ENCODE measurements at regions of chr3 and their contacts with region 1.

Region 1: DNA sequence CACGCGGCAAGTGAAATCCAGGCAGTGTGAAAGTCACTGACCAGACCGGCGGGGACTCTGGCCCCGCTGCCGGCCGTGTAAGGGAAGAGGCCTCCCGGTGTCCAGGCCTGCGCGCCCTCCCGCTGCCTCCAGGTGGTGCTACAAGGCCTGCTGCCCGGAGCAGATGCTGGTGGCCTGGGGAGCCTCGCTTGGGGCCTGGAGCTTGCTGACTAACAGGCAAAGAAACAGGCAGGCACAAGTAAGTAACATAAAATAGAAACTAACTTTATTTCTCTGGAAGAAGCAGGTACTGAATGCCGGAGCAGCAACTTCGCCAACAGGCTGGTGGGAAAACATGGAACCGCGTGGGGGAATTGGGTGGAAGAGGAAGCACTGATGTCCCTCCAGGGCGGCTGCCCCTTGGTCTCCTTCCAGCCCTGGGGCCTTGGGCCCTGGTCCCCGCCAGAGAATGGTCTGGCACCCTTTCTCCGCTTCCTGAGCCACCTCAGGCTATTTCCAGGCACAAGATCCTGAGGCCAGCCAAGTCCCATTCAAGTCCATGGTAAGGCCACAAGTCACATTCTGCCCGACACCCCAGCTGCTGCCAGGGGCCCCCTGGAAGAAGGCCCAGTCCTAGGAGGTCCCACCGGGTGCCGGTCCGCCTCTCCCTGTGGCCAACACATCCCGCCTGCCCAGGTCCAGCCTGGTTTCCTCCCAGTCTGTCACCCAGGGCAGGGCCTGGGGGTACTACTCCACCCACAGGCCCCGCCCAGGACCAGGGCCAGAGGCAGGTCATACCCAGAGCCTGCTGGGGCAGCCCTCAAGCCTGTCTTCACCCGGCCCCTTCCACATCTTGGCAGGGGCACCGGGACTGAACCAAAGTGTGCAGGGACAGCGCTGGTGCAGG is 45.0 kb downstream of the TNK2 start:
- DNase-seq: peak; percentile 89
- H3K4me3 ChIP-seq: no peak overlapping the region
- H3K27ac ChIP-seq: no peak overlapping the region
- H3K4me1 ChIP-seq: no peaks in the 10 kb centered on the region
- H3K27me3 ChIP-seq: no peaks in the 10 kb centered on the region
- CTCF ChIP-seq: peak; percentile 95

Region 2: DNA sequence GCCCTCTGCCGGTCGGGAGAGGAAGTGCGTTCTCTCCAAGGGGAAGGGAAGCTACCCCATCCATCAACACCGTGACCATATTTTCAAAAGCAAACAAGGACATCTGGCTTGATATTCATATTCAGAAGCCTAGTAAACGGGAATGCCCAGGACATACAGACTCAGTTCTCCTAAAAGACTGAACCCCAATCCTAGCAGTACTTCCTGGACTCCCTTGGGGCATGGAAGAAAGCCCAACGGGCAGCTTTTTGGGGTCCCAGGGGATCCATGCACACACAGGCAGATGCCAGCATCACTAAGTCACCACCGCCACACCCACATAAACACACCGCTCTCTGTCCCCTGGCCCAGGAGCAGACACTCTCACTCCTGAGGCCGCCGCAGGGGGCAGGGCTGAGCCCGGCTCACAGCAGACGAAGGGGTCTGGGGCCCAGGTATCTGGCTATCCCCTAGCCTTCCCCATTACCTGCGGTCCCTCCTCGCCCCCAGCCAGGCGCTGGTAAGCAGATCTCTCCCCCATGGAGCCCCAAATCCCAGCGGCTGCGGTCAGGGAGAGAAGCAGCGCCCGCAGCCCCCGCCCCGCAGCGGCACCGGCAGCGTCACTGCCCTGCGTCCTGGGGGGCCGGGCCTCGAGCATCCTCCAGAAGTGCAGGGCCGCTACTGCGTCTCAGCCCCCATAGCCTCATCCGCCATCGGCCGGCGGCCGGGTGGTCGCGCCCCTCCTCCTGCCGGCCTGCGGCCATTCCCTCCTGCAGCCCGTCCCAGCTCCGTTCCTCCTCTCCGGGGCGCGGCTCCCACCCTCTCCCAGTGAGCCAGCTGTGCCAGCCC is 31.6 kb after region 1 on chr3:
- intact Hi-C with region 1: loop called (anchors 2 kb)
- DNase-seq: peak; percentile 64
- H3K4me3 ChIP-seq: peak overlapping the region; percentile 58
- H3K27ac ChIP-seq: peak overlapping the region; percentile 34
- H3K4me1 ChIP-seq: peaks cover 7% of the 10 kb centered on the region
- H3K27me3 ChIP-seq: no peaks in the 10 kb centered on the region
- CTCF ChIP-seq: peak; percentile 96

Region 3: GRCh38 chr3:195909644-195910508 is 46.5 kb after region 1 on chr3:
- intact Hi-C with region 1: loop called (anchors 5 kb)
- DNase-seq: peak; percentile 90
- H3K4me3 ChIP-seq: peak overlapping the region; percentile 31
- H3K27ac ChIP-seq: peak overlapping the region; percentile 35
- H3K4me1 ChIP-seq: peaks cover 18% of the 10 kb centered on the region
- H3K27me3 ChIP-seq: no peaks in the 10 kb centered on the region
- CTCF ChIP-seq: no peak

Measured in colonic mucosa (tissue), 4 donors.